ENCODE measurements at regions of chr3 and their contacts with region 1.

Region 1: DNA sequence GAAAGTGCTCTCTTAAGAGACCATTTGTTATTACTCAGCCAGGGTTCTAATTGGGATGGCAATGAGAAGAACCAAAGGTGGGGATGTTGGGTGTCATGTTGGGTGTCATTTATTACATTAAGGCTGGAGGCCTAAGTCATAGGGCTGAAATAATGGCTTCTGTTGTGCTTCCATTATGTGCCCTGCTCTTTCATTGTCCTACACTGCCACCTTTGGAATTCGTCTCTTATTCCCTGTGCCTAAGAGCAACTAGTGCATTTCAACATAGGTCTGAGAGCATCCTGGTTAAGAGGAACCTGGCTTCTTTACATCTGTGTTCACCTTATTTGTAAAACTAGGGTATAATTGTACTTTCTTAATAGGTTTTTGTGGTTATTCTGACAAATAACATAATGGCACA is 32.2 kb downstream of the RIOX2 start:
- DNase-seq: peak in 4 of 14 experiments; percentile 7 to 53 (median 42)
- ATAC-seq: peak; percentile 59
- H3K4me3 ChIP-seq: no peak overlapping the region
- H3K4me3 Mint-ChIP-seq: no peak overlapping the region
- H3K27ac ChIP-seq: no peak overlapping the region
- H3K27ac Mint-ChIP-seq: no peak overlapping the region
- H3K4me1 ChIP-seq: no peaks in the 10 kb centered on the region
- H3K4me1 Mint-ChIP-seq: no peaks in the 10 kb centered on the region
- H3K27me3 ChIP-seq: no peaks in the 10 kb centered on the region
- H3K27me3 Mint-ChIP-seq: no peaks in the 10 kb centered on the region
- CTCF ChIP-seq: no peak

Region 2: GRCh38 chr3:97793420-97794019 is 146.5 kb before region 1 on chr3:
- CTCF ChIA-PET with region 1: no interaction called
- POLR2A ChIA-PET with region 1: no interaction called
- intact Hi-C with region 1: loop called (anchors 1 to 2 kb)
- DNase-seq: peak in 4 of 14 experiments; percentile 24 to 80 (median 75)
- ATAC-seq: peak; percentile 58
- H3K4me3 ChIP-seq: no peak overlapping the region
- H3K4me3 Mint-ChIP-seq: no peak overlapping the region
- H3K27ac ChIP-seq: no peak overlapping the region
- H3K27ac Mint-ChIP-seq: no peak overlapping the region
- H3K4me1 ChIP-seq: no peaks in the 10 kb centered on the region
- H3K4me1 Mint-ChIP-seq: no peaks in the 10 kb centered on the region
- H3K27me3 ChIP-seq: no peaks in the 10 kb centered on the region
- H3K27me3 Mint-ChIP-seq: no peaks in the 10 kb centered on the region
- CTCF ChIP-seq: peak; percentile 89

Region 3: DNA sequence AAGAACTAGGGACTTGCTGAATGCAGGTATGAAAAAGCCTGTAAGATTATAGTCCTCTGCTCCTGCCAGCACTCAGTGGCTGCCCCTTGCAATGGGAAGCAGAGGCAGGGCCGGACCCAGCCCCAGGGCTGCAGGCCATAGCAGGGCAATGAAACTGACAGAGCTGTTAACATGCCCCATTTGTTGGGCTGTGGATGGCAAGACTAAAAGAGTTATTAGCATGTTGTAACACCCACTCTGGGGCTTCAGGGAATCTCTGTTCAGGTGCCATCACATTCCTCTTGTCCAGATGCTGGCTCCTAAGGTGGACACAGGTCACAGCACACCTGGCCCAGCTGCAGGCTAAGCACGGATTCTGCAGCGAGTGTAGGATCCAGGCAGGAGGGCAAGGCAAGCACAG is 334.9 kb after region 1 on chr3:
- CTCF ChIA-PET with region 1: no interaction called
- POLR2A ChIA-PET with region 1: no interaction called
- intact Hi-C with region 1: no loop called
- DNase-seq: no peak
- ATAC-seq: no peak
- H3K4me3 ChIP-seq: no peak overlapping the region
- H3K4me3 Mint-ChIP-seq: no peak overlapping the region
- H3K27ac ChIP-seq: no peak overlapping the region
- H3K27ac Mint-ChIP-seq: no peak overlapping the region
- H3K4me1 ChIP-seq: no peaks in the 10 kb centered on the region
- H3K4me1 Mint-ChIP-seq: no peaks in the 10 kb centered on the region
- H3K27me3 ChIP-seq: peaks cover 0 to 7% of the 10 kb centered on the region in 2 experiments
- H3K27me3 Mint-ChIP-seq: peaks cover 16% of the 10 kb centered on the region
- CTCF ChIP-seq: no peak